ENCODE measurements at regions of chr14 and their contacts with region 1.

Region 1: GRCh38 chr14:49767562-49768300 is at the start of gene KLHDC2:
- DNase-seq: peak; percentile 50 to 93
- H3K4me3 ChIP-seq: peak within 1 kb of the TSS; percentile 83 to 94
- H3K27ac ChIP-seq: peak within 1 kb of the TSS; percentile 94 to 97
- H3K4me1 ChIP-seq: peaks cover 0 to 24% of the 10 kb centered on the region in 2 donors
- H3K27me3 ChIP-seq: no peaks in the 10 kb centered on the region
- CTCF ChIP-seq: peak in 2 of 3 experiments; percentile 21 to 29
- total RNA-seq, gene KLHDC2: 11.7 TPM

Region 2: DNA sequence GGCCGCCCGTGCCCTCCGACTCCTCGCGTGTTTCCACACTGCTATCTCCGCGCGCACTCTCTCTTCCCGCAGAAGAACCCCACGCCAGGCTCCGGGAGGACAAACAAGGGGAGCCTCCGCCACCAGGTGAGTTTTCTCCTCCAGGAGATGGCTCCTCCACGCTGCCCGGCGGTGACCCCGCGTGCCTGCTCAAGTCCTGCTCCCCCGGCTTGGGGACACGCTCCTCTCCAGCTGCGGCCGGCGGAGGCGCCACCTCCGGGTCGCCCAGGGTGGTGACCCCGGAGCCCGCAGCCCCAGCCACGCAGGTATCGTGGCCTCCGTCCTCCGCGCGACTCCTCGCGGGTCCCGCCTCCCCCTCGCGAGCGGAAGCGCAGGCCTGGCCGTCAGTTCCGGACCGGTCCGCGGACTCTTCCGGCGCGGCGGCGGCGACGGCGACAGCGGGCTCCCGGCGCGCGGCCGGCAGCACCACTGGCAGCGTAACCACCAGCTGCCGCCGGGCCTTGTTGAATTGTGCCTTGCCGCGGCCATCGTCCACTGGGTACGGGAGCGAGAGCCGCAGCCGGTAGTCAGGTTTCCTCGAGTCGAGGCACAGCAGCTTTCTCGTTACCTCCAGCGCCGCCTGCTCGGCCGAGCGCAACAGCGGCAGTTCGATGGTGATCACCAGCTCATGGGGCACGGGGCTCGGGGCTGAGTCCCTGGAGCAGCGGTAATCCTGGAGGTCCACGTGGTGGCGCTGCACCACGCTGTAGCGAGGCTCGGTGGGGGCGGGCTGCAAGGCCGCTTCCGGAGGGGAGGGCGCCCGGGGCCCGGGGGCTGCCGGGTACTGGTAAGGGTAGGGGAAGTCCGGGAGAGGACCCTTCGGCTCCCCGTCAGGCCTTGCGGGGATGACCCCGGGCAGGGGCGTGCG is 133.8 kb before region 1 on chr14:
- intact Hi-C with region 1: loop called (anchors 1 kb)
- DNase-seq: peak; percentile 72 to 96
- H3K4me3 ChIP-seq: peak overlapping the region; percentile 54 to 79
- H3K27ac ChIP-seq: peak overlapping the region; percentile 93 to 96
- H3K4me1 ChIP-seq: peaks cover 0 to 7% of the 10 kb centered on the region in 2 donors
- H3K27me3 ChIP-seq: no peaks in the 10 kb centered on the region
- CTCF ChIP-seq: peak; percentile 73 to 95 (median 76)

Region 3: GRCh38 chr14:49895480-49895879 is 127.7 kb after region 1 on chr14:
- intact Hi-C with region 1: no loop called
- DNase-seq: no peak
- H3K4me3 ChIP-seq: peak overlapping the region; percentile 85 to 95
- H3K27ac ChIP-seq: peak overlapping the region in 1 of 2 donors; percentile 100
- H3K4me1 ChIP-seq: peaks cover 0 to 38% of the 10 kb centered on the region in 2 donors
- H3K27me3 ChIP-seq: no peaks in the 10 kb centered on the region
- CTCF ChIP-seq: no peak

Measured in ascending aorta (tissue), 2 donors.